ENCODE measurements at regions of chr22 and their contacts with region 1.

Region 1: DNA sequence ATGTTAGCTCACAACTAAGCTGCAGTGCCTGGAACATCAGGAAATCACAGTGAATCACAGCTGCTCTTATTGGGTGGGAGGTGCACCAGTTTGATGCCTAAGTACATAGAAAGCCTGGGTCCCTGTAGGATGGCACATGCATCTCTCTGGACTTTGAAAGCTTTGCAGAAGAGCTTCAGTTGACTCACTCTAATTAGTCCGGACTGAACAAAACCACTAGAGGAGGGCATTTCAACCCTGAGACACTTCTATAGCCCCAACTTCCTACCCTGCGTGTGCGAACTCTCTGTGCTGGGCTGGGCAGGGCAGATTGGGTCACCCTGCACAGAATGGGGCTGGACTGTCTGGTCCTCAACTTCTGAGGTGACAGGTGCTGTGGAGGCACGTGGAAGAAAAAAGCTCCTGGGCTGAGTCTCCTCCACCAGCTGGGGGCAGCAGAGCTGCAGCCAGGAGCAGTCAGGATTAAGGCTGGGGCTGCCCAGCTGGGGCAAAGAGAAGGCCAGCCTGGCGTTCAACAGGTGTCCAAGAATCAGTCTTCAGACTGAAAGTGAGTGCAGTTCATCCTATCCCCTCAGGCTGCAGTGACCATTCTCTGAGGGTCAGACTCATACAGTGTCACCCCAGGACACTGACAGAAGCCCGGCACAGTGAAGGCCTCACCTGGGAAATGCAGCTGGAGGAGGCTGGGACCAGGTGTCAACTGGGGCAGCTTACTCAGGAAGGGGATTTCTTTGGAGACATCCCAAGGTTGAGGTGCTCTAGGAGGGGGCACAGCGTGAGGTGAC is 22.1 kb downstream of the GGTLC2 start:
- DNase-seq: peak; percentile 72
- H3K4me3 Mint-ChIP-seq: no peak overlapping the region
- H3K27ac Mint-ChIP-seq: no peak overlapping the region
- H3K4me1 Mint-ChIP-seq: no peaks in the 10 kb centered on the region
- H3K27me3 Mint-ChIP-seq: peaks cover 77% of the 10 kb centered on the region
- CTCF ChIP-seq: peak; percentile 72

Region 2: GRCh38 chr22:22684580-22685561 is 18.4 kb after region 1 on chr22:
- CTCF ChIA-PET with region 1: interaction called, 21 read pairs
- intact Hi-C with region 1: no loop called
- DNase-seq: peak; percentile 75
- H3K4me3 Mint-ChIP-seq: no peak overlapping the region
- H3K27ac Mint-ChIP-seq: no peak overlapping the region
- H3K4me1 Mint-ChIP-seq: no peaks in the 10 kb centered on the region
- H3K27me3 Mint-ChIP-seq: peaks cover 31% of the 10 kb centered on the region
- CTCF ChIP-seq: peak; percentile 76

Region 3: GRCh38 chr22:22770280-22770871 is 103.9 kb after region 1 on chr22:
- CTCF ChIA-PET with region 1: interaction called, 11 read pairs
- intact Hi-C with region 1: no loop called
- DNase-seq: peak; percentile 84
- H3K4me3 Mint-ChIP-seq: no peak overlapping the region
- H3K27ac Mint-ChIP-seq: no peak overlapping the region
- H3K4me1 Mint-ChIP-seq: no peaks in the 10 kb centered on the region
- H3K27me3 Mint-ChIP-seq: peaks cover 97% of the 10 kb centered on the region
- CTCF ChIP-seq: peak; percentile 84